Calu3 (cell line): ENCODE measurements at regions of chr5 and their contacts with region 1.

Region 1: DNA sequence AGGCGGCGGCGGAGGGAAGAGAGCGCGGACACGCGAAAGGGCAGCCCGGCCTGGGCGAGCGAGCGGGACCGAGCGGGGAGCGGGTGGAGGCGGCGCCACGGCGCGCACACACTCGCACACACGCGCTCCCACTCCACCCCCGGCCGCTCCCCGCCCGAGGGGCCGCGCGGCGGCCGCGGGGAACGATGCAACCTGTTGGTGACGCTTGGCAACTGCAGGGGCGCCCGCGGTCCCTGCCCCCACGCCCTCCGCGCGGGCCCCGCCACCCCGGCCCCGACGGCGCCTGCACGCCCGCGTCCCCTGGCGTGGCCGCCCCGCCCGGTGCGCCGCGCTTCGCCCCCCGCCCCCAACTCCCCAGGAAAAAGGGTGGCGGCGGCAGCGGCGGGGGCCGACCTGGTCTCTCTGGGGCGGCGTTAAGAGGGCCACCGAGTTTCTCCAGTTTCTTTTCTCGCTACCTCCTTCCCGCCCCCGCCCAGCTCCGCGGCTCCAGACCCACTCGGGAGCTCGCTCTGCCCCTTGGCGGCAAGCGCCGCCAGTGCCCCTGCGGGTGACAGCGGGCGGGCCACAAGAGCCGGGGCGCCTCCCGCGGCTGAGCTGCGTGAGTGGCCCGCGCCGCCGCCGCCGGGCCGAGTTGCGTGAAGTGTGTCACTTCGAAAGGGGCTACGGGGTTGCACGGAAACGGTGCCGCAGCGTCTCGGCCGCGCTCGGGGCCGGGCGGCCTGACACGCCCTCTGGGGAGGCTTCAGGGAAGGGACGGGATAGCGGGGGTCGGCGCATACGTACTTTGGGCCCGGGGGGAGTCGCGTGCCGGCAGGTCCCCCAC is at the start of gene NR3C1:
- DNase-seq: peak; percentile 89
- H3K4me3 Mint-ChIP-seq: peak within 1 kb of the TSS; percentile 97
- H3K27ac Mint-ChIP-seq: peak within 1 kb of the TSS; percentile 95
- H3K4me1 Mint-ChIP-seq: peaks cover 35% of the 10 kb centered on the region
- H3K27me3 Mint-ChIP-seq: no peaks in the 10 kb centered on the region
- CTCF ChIP-seq: peak; percentile 77
- total RNA-seq, gene NR3C1: 63.1 and 72.4 TPM in 2 replicates

Region 2: DNA sequence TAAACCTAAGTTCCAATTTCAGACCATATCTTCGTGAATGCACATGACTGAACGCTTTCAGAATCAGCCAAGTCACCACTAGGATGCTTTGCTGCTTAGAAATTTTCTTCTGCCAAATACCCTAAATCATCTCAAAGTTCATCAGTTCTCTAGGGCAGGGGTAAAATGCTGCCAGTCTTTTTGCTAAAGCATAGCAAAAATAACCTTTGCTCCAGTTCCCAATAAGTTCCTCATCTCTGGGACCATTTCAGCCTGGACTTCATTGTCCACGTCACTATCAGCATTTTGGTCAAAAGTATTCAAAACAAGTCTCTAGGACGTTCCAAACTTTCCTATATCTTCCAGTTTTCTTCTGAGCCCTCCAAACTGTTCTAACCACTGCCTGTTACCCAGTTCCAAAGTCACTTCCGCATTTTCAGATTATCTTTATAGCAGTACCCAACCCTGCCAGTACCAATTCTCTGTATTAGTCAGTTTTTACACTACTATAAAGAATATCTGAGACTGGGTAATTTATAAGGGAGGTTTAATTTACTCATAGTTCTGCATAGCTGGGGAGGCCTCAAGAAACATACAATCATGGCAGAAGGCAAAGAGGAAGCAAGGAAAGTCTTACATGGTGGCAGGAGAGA is 75.1 kb before region 1 on chr5:
- CTCF ChIA-PET with region 1: no interaction called
- intact Hi-C with region 1: no loop called
- DNase-seq: no peak
- H3K4me3 Mint-ChIP-seq: no peak overlapping the region
- H3K27ac Mint-ChIP-seq: no peak overlapping the region
- H3K4me1 Mint-ChIP-seq: peaks cover 7% of the 10 kb centered on the region
- H3K27me3 Mint-ChIP-seq: no peaks in the 10 kb centered on the region
- CTCF ChIP-seq: no peak

Region 3: GRCh38 chr5:143495821-143496275 is 92.0 kb after region 1 on chr5:
- CTCF ChIA-PET with region 1: no interaction called
- intact Hi-C with region 1: no loop called
- DNase-seq: no peak
- H3K4me3 Mint-ChIP-seq: no peak overlapping the region
- H3K27ac Mint-ChIP-seq: peak overlapping the region; percentile 6
- H3K4me1 Mint-ChIP-seq: peaks cover 23% of the 10 kb centered on the region
- H3K27me3 Mint-ChIP-seq: no peaks in the 10 kb centered on the region
- CTCF ChIP-seq: no peak

Region 4: GRCh38 chr5:143506881-143507551 is 103.2 kb after region 1 on chr5:
- CTCF ChIA-PET with region 1: interaction called, 8 read pairs
- intact Hi-C with region 1: loop called (anchors 2 kb)
- DNase-seq: peak; percentile 64
- H3K4me3 Mint-ChIP-seq: peak overlapping the region; percentile 4
- H3K27ac Mint-ChIP-seq: peak overlapping the region; percentile 73
- H3K4me1 Mint-ChIP-seq: peaks cover 46% of the 10 kb centered on the region
- H3K27me3 Mint-ChIP-seq: no peaks in the 10 kb centered on the region
- CTCF ChIP-seq: no peak

Region 5: GRCh38 chr5:143592648-143593047 is 188.8 kb after region 1 on chr5:
- CTCF ChIA-PET with region 1: no interaction called
- intact Hi-C with region 1: loop called (anchors 2 kb)
- DNase-seq: no peak
- H3K4me3 Mint-ChIP-seq: no peak overlapping the region
- H3K27ac Mint-ChIP-seq: no peak overlapping the region
- H3K4me1 Mint-ChIP-seq: peaks cover 59% of the 10 kb centered on the region
- H3K27me3 Mint-ChIP-seq: no peaks in the 10 kb centered on the region
- CTCF ChIP-seq: no peak

Region 6: DNA sequence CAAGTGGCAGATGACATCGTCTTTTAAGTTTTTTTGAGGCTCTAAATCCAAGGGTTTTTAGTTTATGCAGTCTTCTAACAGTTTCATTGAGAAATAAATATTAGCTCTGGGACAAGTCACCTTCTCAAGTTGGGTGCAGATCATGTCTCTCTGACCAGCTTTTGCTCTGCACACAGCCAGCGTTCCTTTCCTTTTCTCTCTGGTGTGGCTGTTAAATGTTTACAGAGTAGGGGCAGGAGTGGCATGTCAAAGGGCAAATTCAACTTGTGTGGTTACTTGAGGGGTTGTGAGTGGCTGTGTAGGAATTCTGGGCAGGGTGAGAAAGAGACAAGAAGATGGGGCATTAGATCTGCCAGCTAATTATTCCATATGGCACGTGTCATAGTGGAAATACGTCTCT is 220.7 kb after region 1 on chr5:
- CTCF ChIA-PET with region 1: interaction called, 4 read pairs
- intact Hi-C with region 1: loop called (anchors 2 kb)
- DNase-seq: no peak
- H3K4me3 Mint-ChIP-seq: peak overlapping the region; percentile 27
- H3K27ac Mint-ChIP-seq: peak overlapping the region; percentile 72
- H3K4me1 Mint-ChIP-seq: peaks cover 45% of the 10 kb centered on the region
- H3K27me3 Mint-ChIP-seq: no peaks in the 10 kb centered on the region
- CTCF ChIP-seq: no peak

Region 7: GRCh38 chr5:143685246-143685802 is 281.5 kb after region 1 on chr5:
- CTCF ChIA-PET with region 1: interaction called, 3 read pairs
- intact Hi-C with region 1: loop called (anchors 1 kb)
- DNase-seq: peak; percentile 34
- H3K4me3 Mint-ChIP-seq: no peak overlapping the region
- H3K27ac Mint-ChIP-seq: no peak overlapping the region
- H3K4me1 Mint-ChIP-seq: peaks cover 23% of the 10 kb centered on the region
- H3K27me3 Mint-ChIP-seq: no peaks in the 10 kb centered on the region
- CTCF ChIP-seq: no peak

Region 8: GRCh38 chr5:143968011-143968878 is 564.4 kb after region 1 on chr5:
- CTCF ChIA-PET with region 1: interaction called, 4 read pairs
- intact Hi-C with region 1: loop called (anchors 5 kb)
- DNase-seq: peak; percentile 34
- H3K4me3 Mint-ChIP-seq: no peak overlapping the region
- H3K27ac Mint-ChIP-seq: no peak overlapping the region
- H3K4me1 Mint-ChIP-seq: no peaks in the 10 kb centered on the region
- H3K27me3 Mint-ChIP-seq: peaks cover 13% of the 10 kb centered on the region
- CTCF ChIP-seq: peak; percentile 64